ENCODE measurements at regions of chr10 and their contacts with region 1.

Region 1: DNA sequence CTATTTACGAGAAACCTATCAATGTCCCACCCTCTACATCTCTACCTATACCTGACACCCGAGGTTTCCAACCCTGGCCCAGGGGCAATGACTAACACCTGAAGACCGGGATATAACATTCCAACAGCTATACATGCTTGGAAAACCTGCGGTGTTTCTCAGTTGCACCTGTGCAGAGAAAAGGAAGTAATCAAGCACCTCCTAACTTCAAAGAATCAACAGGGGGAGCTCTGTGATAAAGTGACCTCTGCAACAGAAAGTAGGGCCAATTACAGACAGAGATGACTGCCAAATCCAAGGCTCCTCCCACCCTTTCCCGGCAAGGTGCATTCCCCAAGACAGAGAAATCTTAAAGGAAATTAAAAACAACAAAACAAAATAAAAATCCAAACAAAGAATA is 41.3 kb downstream of the CCDC6 start:
- DNase-seq: peak; percentile 37
- CTCF ChIP-seq: peak; percentile 50

Region 2: GRCh38 chr10:59879361-59879913 is 14.3 kb after region 1 on chr10:
- CTCF ChIA-PET with region 1: interaction called, 14 read pairs
- POLR2A ChIA-PET with region 1: no interaction called
- DNase-seq: no peak
- CTCF ChIP-seq: no peak

Region 3: GRCh38 chr10:60032723-60033122 is 167.6 kb after region 1 on chr10:
- CTCF ChIA-PET with region 1: interaction called, 18 read pairs
- POLR2A ChIA-PET with region 1: no interaction called
- DNase-seq: peak; percentile 59
- CTCF ChIP-seq: peak; percentile 65